Spleen (tissue), 13 donors: ENCODE measurements at regions of chr18 and their contacts with region 1.

Region 1: GRCh38 chr18:50277935-50278334 is 3.4 kb downstream of the MBD1 start:
- DNase-seq: no peak
- H3K4me3 ChIP-seq: no peak overlapping the region
- H3K27ac ChIP-seq: no peak overlapping the region
- H3K4me1 ChIP-seq: peaks cover 27 to 49% (median 39%) of the 10 kb centered on the region in 6 donors
- H3K27me3 ChIP-seq: no peaks in the 10 kb centered on the region
- CTCF ChIP-seq: no peak
- POLR2A ChIP-seq: no peak

Region 2: DNA sequence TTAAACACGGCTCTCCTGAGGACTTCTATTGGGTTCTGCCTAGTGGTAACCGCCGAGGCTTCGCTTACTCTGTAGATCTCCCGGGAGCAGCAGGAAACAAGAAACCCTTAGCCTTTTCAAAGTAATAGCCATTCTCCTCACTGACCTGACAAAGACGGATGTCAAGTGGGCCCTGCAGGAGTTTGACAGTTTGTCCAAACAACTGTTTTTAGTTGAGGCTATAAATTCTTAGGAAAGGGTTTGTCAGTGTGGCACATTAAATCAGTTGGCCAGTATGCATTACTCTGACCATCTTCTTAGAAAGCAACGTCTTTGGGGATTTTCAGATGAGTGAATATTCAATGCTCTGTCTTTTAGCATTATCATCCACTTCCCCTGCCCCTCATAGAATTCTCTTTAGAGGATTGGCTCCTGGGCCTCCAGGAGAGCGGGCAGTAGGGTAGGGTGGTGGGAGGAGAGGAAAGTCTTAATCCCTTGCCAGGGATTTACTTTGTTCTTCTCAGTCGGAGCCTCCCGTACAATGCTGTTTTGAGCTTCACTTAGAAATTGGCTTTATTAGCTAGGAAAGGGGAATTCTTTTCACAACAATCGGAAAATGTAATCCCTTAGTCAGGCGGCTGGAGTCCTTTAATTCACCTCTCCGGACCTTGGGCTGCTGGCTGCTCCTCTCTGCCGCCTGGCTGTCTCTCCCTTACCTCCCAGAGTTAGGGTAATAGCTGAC is 777.6 kb before region 1 on chr18:
- intact Hi-C with region 1: loop called (anchors 5 kb)
- DNase-seq: no peak
- H3K4me3 ChIP-seq: no peak overlapping the region
- H3K27ac ChIP-seq: no peak overlapping the region
- H3K4me1 ChIP-seq: no peaks in the 10 kb centered on the region
- H3K27me3 ChIP-seq: peaks cover 0 to 33% (median 5%) of the 10 kb centered on the region in 7 donors
- CTCF ChIP-seq: no peak
- POLR2A ChIP-seq: no peak

Region 3: DNA sequence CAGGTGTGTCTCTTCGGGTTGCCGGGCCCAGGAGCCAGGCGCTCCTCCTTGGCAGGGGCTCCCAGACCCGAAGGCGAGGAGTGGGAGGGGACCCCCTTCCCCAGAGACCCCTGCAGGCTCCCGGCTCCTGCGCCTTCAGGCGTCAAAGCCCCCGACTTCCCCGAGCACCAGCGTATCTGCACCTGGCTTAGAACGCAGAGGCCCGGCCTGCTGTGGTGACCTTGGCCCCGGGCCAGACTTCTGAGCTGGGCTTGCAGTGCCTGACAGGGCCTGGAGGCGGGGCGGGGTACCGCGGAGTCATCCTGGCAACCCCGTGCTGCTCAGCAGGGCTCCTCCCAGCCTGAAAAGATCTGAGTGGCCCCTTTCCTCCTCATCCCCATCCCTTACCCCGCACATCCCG is 124.0 kb after region 1 on chr18:
- intact Hi-C with region 1: no loop called
- DNase-seq: no peak
- H3K4me3 ChIP-seq: no peak overlapping the region
- H3K27ac ChIP-seq: no peak overlapping the region
- H3K4me1 ChIP-seq: no peaks in the 10 kb centered on the region
- H3K27me3 ChIP-seq: peaks cover 0 to 63% (median 11%) of the 10 kb centered on the region in 7 donors
- CTCF ChIP-seq: no peak
- POLR2A ChIP-seq: no peak